ENCODE measurements at regions of chr3 and their contacts with region 1.

Region 1: GRCh38 chr3:56251343-56251945 is 216.8 kb downstream of the ERC2 start:
- DNase-seq: peak in 2 of 9 experiments; percentile 8 to 28
- ATAC-seq: no peak
- H3K4me3 ChIP-seq: no peak overlapping the region
- H3K4me3 Mint-ChIP-seq: no peak overlapping the region
- H3K27ac ChIP-seq: no peak overlapping the region
- H3K27ac Mint-ChIP-seq: no peak overlapping the region
- H3K4me1 ChIP-seq: no peaks in the 10 kb centered on the region
- H3K4me1 Mint-ChIP-seq: no peaks in the 10 kb centered on the region
- H3K27me3 ChIP-seq: no peaks in the 10 kb centered on the region
- H3K27me3 Mint-ChIP-seq: no peaks in the 10 kb centered on the region
- CTCF ChIP-seq: peak; percentile 56

Region 2: DNA sequence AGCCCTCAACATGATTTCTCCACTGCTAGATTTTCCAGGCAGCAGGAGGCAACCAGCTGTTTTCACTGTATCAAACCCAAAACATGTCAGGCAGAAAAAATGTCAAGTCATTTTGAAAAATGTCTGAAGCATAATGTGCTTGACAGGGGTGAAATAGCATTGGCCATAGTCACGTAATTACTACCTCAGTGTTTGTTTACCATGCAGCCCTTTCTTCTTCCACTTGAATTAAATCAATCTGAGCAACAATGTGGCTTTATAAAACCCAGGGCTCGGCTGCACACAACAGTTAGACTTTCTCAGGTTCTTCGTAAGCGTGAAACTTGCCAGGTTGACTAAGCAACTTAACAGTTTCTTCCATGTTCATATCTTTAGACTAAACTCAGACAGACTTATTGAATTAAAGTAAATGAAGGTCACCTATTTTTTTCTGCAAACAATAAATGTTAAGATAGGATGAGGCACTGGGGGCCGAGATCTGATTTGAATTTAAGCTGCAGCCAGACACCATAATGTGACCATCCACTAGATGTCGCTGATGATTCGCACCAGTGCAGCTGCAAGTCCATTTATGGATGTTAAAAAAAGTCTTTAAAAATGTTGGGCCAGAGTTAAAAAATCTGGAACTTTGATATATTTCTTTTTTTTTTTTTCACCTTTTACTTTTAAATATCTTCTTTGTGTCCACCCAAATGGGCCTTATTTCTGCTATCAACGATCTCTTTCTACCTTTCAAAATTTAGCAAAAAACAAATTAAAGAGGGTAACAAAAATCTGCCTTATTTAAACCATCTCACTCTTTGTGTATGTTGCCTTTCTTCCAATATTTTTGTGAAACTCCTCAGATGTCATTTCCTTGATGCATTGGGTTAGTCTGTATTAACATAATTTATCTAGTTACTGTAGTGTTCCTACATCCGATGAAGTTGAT is 1823.2 kb before region 1 on chr3:
- CTCF ChIA-PET with region 1: interaction called, 3 read pairs
- POLR2A ChIA-PET with region 1: no interaction called
- intact Hi-C with region 1: loop called in 1 of 2 experiments (anchors 5 kb)
- DNase-seq: peak in 2 of 9 experiments; percentile 19 to 41
- ATAC-seq: no peak
- H3K4me3 ChIP-seq: no peak overlapping the region
- H3K4me3 Mint-ChIP-seq: no peak overlapping the region
- H3K27ac ChIP-seq: no peak overlapping the region
- H3K27ac Mint-ChIP-seq: no peak overlapping the region
- H3K4me1 ChIP-seq: no peaks in the 10 kb centered on the region
- H3K4me1 Mint-ChIP-seq: no peaks in the 10 kb centered on the region
- H3K27me3 ChIP-seq: no peaks in the 10 kb centered on the region
- H3K27me3 Mint-ChIP-seq: peaks cover 8% of the 10 kb centered on the region
- CTCF ChIP-seq: peak; percentile 42

Region 3: DNA sequence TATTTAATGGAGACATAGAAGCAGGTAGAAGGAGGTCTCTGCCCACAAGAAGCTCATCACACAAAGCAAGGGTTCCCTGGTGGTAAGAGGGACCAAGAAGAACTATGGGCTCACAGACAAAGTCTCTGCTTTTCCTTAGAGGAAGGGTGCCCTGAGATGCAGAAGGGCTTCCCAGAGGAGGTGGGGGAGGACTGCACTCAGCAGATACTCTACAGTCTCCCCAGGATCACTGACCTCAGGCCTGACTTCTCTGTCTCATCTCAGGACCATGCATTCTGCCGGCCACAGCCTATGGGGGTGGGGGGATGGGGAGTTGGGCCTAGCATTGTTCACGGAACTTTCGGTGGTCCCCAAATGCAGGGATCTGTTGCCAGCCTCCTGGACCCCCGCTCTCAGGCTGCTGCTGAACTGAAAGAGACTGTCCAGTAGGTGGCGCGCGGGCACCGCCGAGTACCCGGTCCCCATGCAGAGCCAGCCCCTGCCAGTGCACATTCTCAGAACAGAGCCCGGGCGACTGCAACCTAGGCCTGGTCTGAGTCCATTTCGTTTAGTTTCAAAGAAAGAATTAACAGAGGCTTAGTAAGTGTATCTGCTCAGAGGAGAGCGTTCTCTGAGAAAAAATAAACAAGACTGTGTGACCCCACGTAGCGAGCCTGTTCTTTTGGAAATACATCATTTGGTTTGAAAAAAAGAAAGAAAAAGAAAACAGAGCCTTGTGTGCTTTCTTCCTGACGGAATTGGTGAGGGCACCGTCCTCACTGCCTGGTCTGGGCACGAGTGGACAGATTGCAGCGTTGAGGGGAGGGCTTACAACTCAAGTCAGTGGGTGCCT is 1397.7 kb before region 1 on chr3:
- CTCF ChIA-PET with region 1: no interaction called
- POLR2A ChIA-PET with region 1: no interaction called
- intact Hi-C with region 1: loop called (anchors 5 kb)
- DNase-seq: peak in 5 of 9 experiments; percentile 4 to 24 (median 18)
- ATAC-seq: no peak
- H3K4me3 ChIP-seq: no peak overlapping the region
- H3K4me3 Mint-ChIP-seq: no peak overlapping the region
- H3K27ac ChIP-seq: no peak overlapping the region
- H3K27ac Mint-ChIP-seq: no peak overlapping the region
- H3K4me1 ChIP-seq: no peaks in the 10 kb centered on the region
- H3K4me1 Mint-ChIP-seq: no peaks in the 10 kb centered on the region
- H3K27me3 ChIP-seq: no peaks in the 10 kb centered on the region
- H3K27me3 Mint-ChIP-seq: peaks cover 3% of the 10 kb centered on the region
- CTCF ChIP-seq: no peak

Region 4: GRCh38 chr3:56238299-56238698 is 13.1 kb before region 1 on chr3:
- CTCF ChIA-PET with region 1: interaction called, 10 read pairs
- POLR2A ChIA-PET with region 1: no interaction called
- intact Hi-C with region 1: no loop called
- DNase-seq: no peak
- ATAC-seq: no peak
- H3K4me3 ChIP-seq: no peak overlapping the region
- H3K4me3 Mint-ChIP-seq: no peak overlapping the region
- H3K27ac ChIP-seq: no peak overlapping the region
- H3K27ac Mint-ChIP-seq: no peak overlapping the region
- H3K4me1 ChIP-seq: no peaks in the 10 kb centered on the region
- H3K4me1 Mint-ChIP-seq: no peaks in the 10 kb centered on the region
- H3K27me3 ChIP-seq: no peaks in the 10 kb centered on the region
- H3K27me3 Mint-ChIP-seq: peaks cover 2% of the 10 kb centered on the region
- CTCF ChIP-seq: no peak